HCT116 (cell line): ENCODE measurements at regions of chr5 and their contacts with region 1.

Region 1: DNA sequence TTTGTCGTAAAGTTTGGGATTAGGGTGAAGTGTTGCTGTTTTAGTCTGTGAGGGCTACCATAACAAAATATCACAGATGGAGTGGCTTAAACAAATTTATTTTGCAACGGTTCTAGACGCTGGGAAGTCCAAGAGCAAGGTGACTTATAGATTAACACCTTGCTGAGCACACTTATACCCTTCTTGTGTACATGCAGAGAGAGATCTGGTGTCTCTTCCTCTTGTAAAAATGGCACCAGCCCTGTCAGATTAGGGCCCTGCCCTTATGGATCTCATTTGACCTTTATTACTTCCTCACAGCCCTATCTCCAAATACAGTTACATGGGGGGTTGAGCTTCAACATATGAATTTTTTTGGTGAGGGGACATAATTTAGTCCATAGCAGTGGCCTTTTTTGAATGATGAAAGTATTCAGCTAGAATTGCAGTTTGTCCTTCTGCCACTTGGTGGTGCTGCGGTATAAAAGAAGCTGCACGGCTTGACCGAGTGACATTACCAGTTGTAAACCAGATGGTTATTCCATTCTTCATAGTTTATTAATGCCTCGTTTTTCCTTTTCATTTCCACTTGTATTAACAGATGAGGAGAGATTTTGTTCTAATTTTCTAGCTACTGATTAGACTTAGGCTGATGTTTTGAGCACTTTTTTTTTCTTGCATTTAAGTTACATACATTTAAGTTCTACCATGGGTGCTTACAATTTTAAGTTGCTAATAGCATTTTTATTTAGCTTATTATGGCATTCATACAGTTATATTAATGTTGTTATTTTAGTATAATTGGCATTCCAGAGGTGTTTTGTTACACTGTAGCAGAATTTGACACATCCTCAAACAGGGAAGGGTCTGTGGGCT is 19.4 kb downstream of the DCP2 start:
- DNase-seq: peak; percentile 42
- ATAC-seq: peak; percentile 87
- H3K4me3 ChIP-seq: no peak overlapping the region
- H3K27ac ChIP-seq: no peak overlapping the region
- H3K4me1 ChIP-seq: no peaks in the 10 kb centered on the region
- H3K27me3 ChIP-seq: no peaks in the 10 kb centered on the region
- CTCF ChIP-seq: peak; percentile 72 to 97 (median 81)
- POLR2A ChIP-seq: no peak
- RAD21 ChIP-seq: peak; percentile 92

Region 2: GRCh38 chr5:112742424-112742823 is 253.6 kb before region 1 on chr5:
- CTCF ChIA-PET with region 1: no interaction called
- POLR2A ChIA-PET with region 1: no interaction called
- RAD21 ChIA-PET with region 1: no interaction called
- intact Hi-C with region 1: no loop called
- DNase-seq: no peak
- ATAC-seq: no peak
- H3K4me3 ChIP-seq: no peak overlapping the region
- H3K27ac ChIP-seq: no peak overlapping the region
- H3K4me1 ChIP-seq: peaks cover 0 to 9% of the 10 kb centered on the region in 2 experiments; a peak in 2 of 4 replicates
- H3K27me3 ChIP-seq: no peaks in the 10 kb centered on the region
- CTCF ChIP-seq: no peak
- POLR2A ChIP-seq: no peak
- RAD21 ChIP-seq: no peak

Region 3: GRCh38 chr5:112958093-112959088 is 37.6 kb before region 1 on chr5:
- CTCF ChIA-PET with region 1: no interaction called
- POLR2A ChIA-PET with region 1: no interaction called
- RAD21 ChIA-PET with region 1: no interaction called
- intact Hi-C with region 1: no loop called
- DNase-seq: peak; percentile 51
- ATAC-seq: peak; percentile 78
- H3K4me3 ChIP-seq: no peak overlapping the region
- H3K27ac ChIP-seq: no peak overlapping the region; the same call in 1 of the 2 replicates
- H3K4me1 ChIP-seq: peaks cover 28 to 37% of the 10 kb centered on the region in 2 experiments
- H3K27me3 ChIP-seq: no peaks in the 10 kb centered on the region
- CTCF ChIP-seq: no peak
- POLR2A ChIP-seq: no peak
- RAD21 ChIP-seq: no peak

Region 4: GRCh38 chr5:113336975-113337374 is 341.0 kb after region 1 on chr5:
- CTCF ChIA-PET with region 1: interaction called, 34 read pairs
- POLR2A ChIA-PET with region 1: no interaction called
- RAD21 ChIA-PET with region 1: no interaction called
- intact Hi-C with region 1: no loop called
- DNase-seq: peak; percentile 70
- ATAC-seq: peak; percentile 95
- H3K4me3 ChIP-seq: no peak overlapping the region
- H3K27ac ChIP-seq: no peak overlapping the region
- H3K4me1 ChIP-seq: no peaks in the 10 kb centered on the region
- H3K27me3 ChIP-seq: no peaks in the 10 kb centered on the region
- CTCF ChIP-seq: peak; percentile 60 to 69 (median 68)
- POLR2A ChIP-seq: no peak
- RAD21 ChIP-seq: peak; percentile 88